Adrenal gland (tissue), 19 donors: ENCODE measurements at regions of chr14 and their contacts with region 1.

Region 1: GRCh38 chr14:51780006-51780692 is 80.3 kb upstream of the GNG2 start:
- DNase-seq: peak; percentile 58 to 92 (median 81)
- H3K4me3 ChIP-seq: no peak overlapping the region
- H3K27ac ChIP-seq: no peak overlapping the region
- H3K4me1 ChIP-seq: peaks cover 0 to 18% of the 10 kb centered on the region in 2 donors
- H3K27me3 ChIP-seq: no peaks in the 10 kb centered on the region
- CTCF ChIP-seq: peak; percentile 70 to 89 (median 76)
- POLR2A ChIP-seq: no peak

Region 2: DNA sequence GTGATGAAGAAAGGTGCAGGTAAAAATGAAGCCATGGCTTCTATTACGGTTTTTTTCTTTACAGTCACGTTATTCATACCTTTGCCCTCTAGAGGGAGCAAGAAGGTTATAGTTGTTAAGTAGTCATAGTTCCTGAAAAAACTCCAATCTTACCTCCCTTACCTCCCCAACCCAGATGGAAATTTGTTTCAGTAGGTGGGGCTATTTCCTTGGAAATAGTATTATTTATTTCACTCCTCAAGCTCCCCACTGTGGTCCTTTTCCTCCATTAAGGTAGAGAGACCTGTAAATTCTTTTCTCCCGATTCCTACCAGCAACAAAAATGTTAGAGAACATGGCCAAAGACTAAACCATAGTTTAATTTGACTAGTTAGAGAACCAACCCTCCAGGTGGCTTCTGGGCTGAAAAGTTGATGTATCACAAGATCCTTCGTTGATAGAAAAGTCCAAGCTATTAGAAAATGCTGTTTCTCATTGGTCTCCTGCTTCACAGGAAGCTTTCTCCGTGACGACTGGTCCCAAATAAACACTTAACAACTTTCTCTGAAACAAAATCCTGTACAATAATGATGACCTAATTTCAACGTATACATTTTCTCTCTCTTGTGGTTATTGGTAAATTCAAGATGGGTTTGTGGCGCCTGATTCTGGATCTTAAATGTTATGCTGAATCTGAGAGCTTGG is 496.6 kb before region 1 on chr14:
- intact Hi-C with region 1: loop called (anchors 5 to 10 kb)
- DNase-seq: peak in 1 of 7 donors; percentile 3
- H3K4me3 ChIP-seq: no peak overlapping the region
- H3K27ac ChIP-seq: no peak overlapping the region
- H3K4me1 ChIP-seq: no peaks in the 10 kb centered on the region
- H3K27me3 ChIP-seq: no peaks in the 10 kb centered on the region
- CTCF ChIP-seq: peak; percentile 53 to 96 (median 84)
- POLR2A ChIP-seq: no peak

Region 3: GRCh38 chr14:51369814-51370213 is 410.3 kb before region 1 on chr14:
- intact Hi-C with region 1: loop called in 1 of 2 experiments (anchors 10 kb)
- DNase-seq: peak in 1 of 7 donors; percentile 26
- H3K4me3 ChIP-seq: no peak overlapping the region
- H3K27ac ChIP-seq: no peak overlapping the region
- H3K4me1 ChIP-seq: no peaks in the 10 kb centered on the region
- H3K27me3 ChIP-seq: no peaks in the 10 kb centered on the region
- CTCF ChIP-seq: peak in 4 of 6 experiments; percentile 29 to 48 (median 42)
- POLR2A ChIP-seq: no peak

Region 4: DNA sequence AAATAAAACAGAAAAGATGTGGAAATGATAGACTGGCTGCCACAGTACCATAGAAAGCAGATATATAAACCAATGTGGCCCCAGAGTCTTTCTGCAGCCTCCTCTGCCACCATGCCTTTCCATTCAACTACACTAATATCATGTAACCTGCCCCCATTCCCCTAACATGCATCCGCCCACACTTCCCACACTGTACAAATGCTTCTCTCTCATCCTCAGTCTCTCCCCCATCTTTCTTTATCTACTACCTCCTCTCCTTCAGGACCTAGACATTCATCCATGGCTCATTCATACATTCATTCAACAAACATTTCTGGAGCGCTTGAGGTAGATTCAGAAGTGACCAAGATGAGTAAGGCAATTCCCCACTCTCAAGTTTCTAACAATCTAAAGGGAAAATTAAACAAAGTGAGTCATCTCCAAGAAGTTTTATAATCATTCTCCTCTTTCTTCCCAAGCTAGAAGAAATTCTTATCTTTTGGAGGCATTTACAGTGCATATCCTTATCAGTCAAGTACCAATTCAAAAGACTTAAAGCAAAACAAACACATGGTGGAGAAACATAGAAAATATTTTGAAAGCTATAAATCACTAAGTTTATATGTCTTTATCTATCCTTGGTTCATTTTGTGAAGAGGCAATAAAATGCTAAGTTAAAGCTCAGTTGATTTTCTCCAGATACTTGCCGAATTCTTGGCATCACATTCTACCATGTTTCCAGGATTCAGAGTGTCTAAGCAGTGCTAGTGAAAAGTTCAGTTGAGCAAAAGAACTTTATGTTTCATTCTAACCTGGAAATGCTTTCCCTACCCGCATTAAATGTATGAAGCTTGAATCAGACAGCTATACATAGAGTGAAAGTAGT is 198.9 kb before region 1 on chr14:
- intact Hi-C with region 1: no loop called
- DNase-seq: no peak
- H3K4me3 ChIP-seq: no peak overlapping the region
- H3K27ac ChIP-seq: no peak overlapping the region
- H3K4me1 ChIP-seq: no peaks in the 10 kb centered on the region
- H3K27me3 ChIP-seq: no peaks in the 10 kb centered on the region
- CTCF ChIP-seq: no peak
- POLR2A ChIP-seq: no peak

Region 5: GRCh38 chr14:51651388-51652167 is 128.6 kb before region 1 on chr14 and contains the start of gene FRMD6:
- intact Hi-C with region 1: loop called (anchors 5 to 10 kb)
- DNase-seq: peak; percentile 85 to 90 (median 87)
- H3K4me3 ChIP-seq: peak within 1 kb of the TSS; percentile 71 to 80 (median 75)
- H3K27ac ChIP-seq: peak within 1 kb of the TSS; percentile 39 to 99 (median 95)
- H3K4me1 ChIP-seq: peaks cover 6 to 30% of the 10 kb centered on the region in 2 donors
- H3K27me3 ChIP-seq: no peaks in the 10 kb centered on the region
- CTCF ChIP-seq: peak; percentile 58 to 88 (median 73)
- POLR2A ChIP-seq: peak; percentile 69 to 81
- total RNA-seq, gene FRMD6: 15.3 to 42.6 (median 28.1) TPM